ENCODE measurements at regions of chr5 and their contacts with region 1.

Region 1: DNA sequence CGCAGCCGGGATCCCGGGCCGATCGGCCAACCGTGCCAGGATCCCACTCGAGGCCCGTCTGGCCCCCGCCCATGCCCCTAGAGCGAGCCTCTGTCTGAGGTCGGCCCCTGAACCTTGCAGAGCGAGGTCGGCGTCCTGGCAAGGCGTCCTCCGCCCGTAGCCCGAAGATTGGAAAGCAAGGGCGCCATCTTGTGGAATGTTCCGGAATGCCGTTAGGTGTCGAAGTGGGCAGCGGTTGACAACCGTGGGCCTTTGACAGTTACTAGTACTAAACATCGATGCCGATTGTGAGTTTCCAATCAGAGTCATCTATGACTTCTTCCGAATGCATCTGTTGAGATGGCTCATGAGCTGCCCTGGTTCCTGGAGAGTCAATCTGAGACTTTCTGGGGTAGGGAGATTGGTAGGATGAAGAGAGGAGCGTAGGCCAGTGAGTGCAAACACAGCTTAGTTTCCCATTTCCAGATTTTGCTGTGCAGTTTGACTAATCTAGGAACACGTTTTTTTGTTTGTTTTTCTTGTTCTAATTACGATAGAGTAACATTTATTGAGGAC is 923 bp upstream of the PLK2 start:
- DNase-seq: no peak
- H3K4me3 ChIP-seq: peak overlapping the region; percentile 88
- CTCF ChIP-seq: peak; percentile 84

Region 2: DNA sequence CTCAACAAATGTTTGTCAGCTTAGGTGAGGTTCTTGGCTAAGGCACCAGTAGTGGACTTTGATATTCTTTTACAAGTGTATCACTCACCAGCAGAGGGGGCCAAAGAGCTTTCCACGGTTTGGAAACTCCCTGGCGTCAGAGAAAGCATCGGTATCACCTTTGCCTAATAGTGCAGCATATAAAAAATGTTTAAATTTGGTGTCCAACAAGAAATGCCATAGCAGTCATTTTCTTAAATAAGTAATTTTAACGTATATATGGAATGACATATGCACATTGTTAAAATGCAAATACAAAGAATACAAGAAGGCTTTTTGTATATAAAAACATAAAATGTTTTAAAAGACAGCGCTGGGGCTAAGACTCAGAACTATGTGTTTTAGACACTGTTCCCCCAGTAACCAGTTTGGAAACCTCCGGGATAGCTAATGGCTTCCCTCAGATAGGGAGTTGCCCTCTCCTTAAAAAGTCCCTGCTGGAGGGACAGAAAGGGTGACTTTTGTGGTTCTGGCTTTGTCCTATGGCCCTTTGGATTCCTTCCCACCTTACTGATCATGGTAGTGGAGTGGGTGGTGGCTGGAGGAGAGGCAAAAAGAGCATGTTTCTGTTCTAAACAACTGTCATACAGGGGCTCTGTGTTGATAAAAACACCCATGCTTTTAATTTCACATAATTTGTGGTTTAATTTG is 1162.4 kb before region 1 on chr5:
- CTCF ChIA-PET with region 1: interaction called, 157 read pairs
- POLR2A ChIA-PET with region 1: interaction called, 6 read pairs
- DNase-seq: peak; percentile 24
- H3K4me3 ChIP-seq: no peak overlapping the region
- CTCF ChIP-seq: peak; percentile 63

Region 3: DNA sequence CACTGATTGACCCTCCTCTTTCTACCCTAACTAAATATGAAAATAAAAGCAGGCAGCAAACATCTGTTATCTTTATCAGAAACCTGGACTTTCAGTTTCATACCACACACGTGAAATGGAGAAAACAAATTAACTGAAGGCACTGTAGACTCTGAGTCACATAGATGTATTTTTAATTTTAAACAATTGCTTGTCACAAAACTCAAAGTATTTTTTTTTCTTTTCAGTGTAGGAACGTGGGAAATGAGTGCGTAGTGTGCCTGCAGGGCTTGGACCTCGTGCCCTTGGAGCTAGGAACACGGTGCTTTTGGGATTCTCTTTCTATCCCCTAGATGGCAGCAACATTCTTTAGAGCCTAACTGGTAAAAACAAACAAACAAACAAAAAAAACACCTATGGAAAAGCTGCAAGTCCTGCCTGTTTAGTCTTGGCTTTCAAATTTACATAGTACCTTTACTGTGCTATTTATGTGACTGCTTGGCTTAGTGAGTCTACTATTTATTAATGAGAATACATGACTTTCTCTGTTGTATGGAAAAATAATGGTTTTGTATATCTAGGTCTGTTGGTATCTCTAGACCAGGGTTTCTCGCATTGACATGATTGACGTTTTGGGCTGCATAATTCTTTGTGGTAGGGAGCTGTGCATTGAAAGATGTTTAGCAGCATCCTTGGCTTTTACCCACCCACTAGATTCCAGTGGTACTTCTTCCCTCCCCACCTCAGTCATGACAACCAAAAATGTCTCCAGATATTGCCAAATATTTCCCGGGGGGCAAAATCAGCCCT is 961.4 kb before region 1 on chr5:
- CTCF ChIA-PET with region 1: interaction called, 121 read pairs
- POLR2A ChIA-PET with region 1: interaction called, 14 read pairs
- DNase-seq: no peak
- H3K4me3 ChIP-seq: no peak overlapping the region
- CTCF ChIP-seq: peak; percentile 61

Region 4: DNA sequence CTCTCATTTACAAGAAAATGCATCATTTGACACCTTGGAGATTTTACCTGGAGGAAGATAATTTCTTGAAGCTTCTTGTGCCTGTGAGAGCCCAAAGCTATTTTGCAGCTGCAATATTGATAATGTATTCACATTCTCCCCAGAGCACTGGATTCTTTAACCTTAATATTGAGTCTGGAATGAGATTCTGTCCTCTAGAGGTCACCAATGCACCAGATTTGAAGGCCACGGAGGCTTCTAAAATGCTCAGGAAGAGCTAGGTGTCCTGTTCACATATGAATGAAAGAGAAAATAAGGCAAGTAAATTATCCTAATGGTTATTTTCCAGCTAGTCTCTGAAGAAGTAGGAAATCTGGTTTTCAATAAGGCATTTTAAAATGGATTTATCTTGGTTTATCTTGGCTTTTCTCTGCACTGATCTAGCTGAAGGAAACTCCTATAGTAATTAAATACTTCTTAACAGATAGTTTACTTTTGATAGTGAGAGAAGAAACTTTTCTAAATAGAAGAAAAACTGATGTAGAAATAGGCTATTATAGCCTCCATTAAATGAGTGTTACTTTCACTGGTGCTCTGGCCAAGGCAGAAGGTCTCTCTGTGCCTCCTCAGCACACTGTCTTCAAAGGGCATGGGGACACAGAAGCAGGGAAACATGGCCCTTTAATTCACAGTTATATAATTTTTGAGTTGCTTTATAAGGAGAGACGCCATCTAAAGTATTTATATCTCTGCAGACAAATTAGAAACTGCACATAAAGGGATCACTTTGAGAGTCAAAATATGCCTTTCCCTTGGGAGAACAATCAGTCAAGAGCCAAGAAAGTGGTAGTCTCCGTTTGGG is 681.2 kb before region 1 on chr5:
- CTCF ChIA-PET with region 1: interaction called, 283 read pairs
- POLR2A ChIA-PET with region 1: interaction called, 25 read pairs
- DNase-seq: peak; percentile 23
- H3K4me3 ChIP-seq: no peak overlapping the region
- CTCF ChIP-seq: peak; percentile 62

Region 5: GRCh38 chr5:57862457-57862911 is 598.3 kb before region 1 on chr5:
- CTCF ChIA-PET with region 1: interaction called, 8 read pairs
- POLR2A ChIA-PET with region 1: interaction called, 15 read pairs
- DNase-seq: peak; percentile 95
- H3K4me3 ChIP-seq: no peak overlapping the region
- CTCF ChIP-seq: no peak

Region 6: DNA sequence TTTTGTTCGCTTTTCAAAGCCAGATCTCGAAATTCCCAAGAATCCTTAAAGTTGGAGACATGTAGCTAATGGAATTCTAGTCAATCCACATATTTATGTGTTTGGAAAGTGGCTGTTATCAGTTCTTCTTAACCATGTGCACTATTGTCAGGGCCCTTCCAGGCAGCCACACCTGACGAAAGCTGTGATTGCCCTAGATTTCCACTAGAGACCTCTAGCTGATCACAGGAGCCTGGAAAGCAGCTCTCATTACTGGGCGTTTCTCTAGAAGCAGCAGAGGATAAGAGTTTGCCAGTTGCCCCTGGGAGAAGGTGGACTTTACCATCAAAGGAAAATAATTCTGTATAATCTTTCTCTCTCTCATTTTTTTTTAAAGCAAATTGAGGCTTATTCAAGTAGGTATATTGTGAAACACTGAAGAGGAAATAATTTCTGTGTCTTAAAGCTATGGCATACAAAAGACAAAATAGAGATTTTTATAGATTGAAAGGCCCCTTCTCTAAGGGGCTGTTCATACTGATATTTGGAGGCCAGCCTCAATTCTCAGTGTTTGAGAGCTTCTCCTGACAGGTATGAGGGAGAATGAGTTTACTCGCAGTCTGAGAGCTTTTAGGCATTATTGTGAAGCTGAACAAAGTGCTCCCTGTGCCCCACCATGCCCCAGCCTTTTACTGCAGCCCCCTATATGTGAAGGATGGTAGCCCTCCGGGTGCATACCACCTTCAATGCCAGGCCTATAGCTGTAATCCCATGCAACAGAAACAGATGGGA is 572.8 kb before region 1 on chr5:
- CTCF ChIA-PET with region 1: interaction called, 51 read pairs
- POLR2A ChIA-PET with region 1: interaction called, 17 read pairs
- DNase-seq: no peak
- H3K4me3 ChIP-seq: no peak overlapping the region
- CTCF ChIP-seq: peak; percentile 60

Region 7: GRCh38 chr5:58133631-58134296 is 327.0 kb before region 1 on chr5:
- CTCF ChIA-PET with region 1: no interaction called
- POLR2A ChIA-PET with region 1: interaction called, 10 read pairs
- DNase-seq: no peak
- H3K4me3 ChIP-seq: no peak overlapping the region; the same call in 1 of the 2 replicates
- CTCF ChIP-seq: no peak

Measured in AG04449 (cell line).